ENCODE measurements at regions of chr6 and their contacts with region 1.

Region 1: DNA sequence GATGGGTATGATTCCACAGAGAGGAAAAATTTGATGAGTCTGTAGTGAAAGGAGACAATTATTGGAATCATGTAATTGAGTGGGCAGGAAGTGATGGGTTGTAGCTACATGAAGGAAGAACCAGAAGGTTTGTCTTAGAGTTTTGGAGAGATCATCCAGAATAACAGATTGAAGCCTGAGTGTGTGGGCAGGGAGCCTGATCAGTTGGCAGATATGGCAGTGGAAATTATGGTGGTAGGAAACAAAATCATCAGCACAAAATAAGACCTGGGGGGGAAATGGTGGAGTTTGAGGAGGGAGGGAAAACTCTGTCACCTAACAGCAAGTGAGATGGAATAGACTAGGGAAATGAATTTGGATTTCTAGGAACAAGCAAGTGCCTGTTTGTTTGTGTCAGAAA is 606.6 kb upstream of the MAP3K7 start:
- DNase-seq: no peak
- H3K4me3 ChIP-seq: no peak overlapping the region
- H3K27ac ChIP-seq: no peak overlapping the region
- H3K4me1 ChIP-seq: no peaks in the 10 kb centered on the region
- H3K27me3 ChIP-seq: no peaks in the 10 kb centered on the region
- CTCF ChIP-seq: no peak
- POLR2A ChIP-seq: no peak

Region 2: DNA sequence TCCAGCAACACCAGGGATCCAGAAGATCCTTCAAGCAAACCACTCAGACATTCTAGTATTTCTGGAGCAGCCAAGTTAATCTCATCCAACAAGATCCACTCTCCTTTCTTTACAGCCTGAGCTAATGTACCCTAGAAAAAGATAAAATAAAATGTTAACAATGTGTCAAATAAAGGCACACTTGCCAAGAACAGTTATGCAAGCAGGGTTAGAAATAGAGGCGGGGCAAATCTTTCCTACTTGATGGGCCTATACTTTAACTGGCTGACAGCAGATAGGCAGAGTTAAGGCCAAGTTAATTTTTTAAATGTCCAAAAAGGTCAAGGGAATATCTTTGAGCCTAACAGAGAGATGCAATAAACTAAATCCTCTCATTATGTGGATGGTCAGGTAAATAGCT is 1434.6 kb before region 1 on chr6:
- intact Hi-C with region 1: no loop called
- DNase-seq: no peak
- H3K4me3 ChIP-seq: no peak overlapping the region
- H3K27ac ChIP-seq: no peak overlapping the region
- H3K4me1 ChIP-seq: no peaks in the 10 kb centered on the region
- H3K27me3 ChIP-seq: no peaks in the 10 kb centered on the region
- CTCF ChIP-seq: no peak
- POLR2A ChIP-seq: no peak

Region 3: GRCh38 chr6:91221072-91221720 is 27.8 kb after region 1 on chr6:
- intact Hi-C with region 1: no loop called
- DNase-seq: no peak
- H3K4me3 ChIP-seq: no peak overlapping the region
- H3K27ac ChIP-seq: no peak overlapping the region
- H3K4me1 ChIP-seq: no peaks in the 10 kb centered on the region
- H3K27me3 ChIP-seq: no peaks in the 10 kb centered on the region
- CTCF ChIP-seq: no peak
- POLR2A ChIP-seq: no peak

Region 4: DNA sequence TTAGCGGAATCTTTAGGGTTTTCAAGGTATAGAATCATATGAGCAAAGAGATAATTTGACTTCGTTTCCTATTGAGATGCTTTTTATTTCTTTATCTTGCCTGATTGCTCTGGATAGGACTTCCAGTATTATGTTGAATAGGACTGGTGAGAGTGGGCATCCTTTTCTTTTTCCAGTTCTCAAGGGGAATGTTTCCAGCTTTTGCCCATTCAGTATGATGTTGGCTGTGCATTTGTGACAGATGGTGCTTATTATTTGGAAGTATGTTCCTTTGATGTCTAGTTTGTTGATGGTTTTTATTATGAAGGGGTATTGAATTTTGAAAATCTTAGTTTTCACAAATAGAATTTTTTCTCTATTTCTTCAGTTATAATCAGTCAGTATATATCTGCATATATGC is 50.0 kb after region 1 on chr6:
- intact Hi-C with region 1: no loop called
- DNase-seq: no peak
- H3K4me3 ChIP-seq: no peak overlapping the region
- H3K27ac ChIP-seq: no peak overlapping the region
- H3K4me1 ChIP-seq: no peaks in the 10 kb centered on the region
- H3K27me3 ChIP-seq: no peaks in the 10 kb centered on the region
- CTCF ChIP-seq: no peak
- POLR2A ChIP-seq: no peak

Region 5: DNA sequence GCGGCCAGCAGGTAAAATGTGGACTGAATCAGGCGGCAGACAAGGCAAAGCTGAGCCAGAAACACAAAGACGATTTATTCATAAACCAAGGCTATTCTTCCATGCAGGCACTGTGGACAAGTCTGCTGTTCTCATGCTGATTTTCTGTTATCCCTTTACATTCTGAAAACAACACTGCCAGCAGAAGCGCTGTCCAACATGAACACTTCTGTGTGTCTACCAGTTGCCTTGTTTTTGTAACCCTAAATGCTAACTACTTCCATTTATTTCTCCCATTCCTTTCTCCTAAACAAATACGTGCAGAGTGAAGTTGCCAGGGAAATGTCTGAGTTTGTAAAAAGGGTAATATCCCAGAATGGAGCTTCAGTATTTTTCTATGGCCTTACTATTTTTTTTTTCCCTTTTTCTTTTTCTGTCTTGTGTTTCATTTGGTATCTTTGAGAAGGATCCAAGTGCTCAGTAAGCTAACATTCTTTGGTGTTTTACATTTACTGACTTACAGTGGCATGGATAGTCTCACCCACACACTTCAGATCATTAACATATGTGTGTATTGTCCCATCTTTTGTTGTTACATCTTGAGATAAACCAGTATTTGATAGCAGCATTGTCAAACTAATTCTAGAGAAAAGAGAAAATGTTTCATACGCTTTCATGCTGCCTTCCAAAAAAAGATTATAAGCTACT is 702.3 kb after region 1 on chr6:
- intact Hi-C with region 1: loop called (anchors 5 kb)
- DNase-seq: no peak
- H3K4me3 ChIP-seq: no peak overlapping the region
- H3K27ac ChIP-seq: no peak overlapping the region
- H3K4me1 ChIP-seq: no peaks in the 10 kb centered on the region
- H3K27me3 ChIP-seq: no peaks in the 10 kb centered on the region
- CTCF ChIP-seq: no peak
- POLR2A ChIP-seq: no peak